ENCODE measurements at regions of chr2 and their contacts with region 1.

Region 1: GRCh38 chr2:218568190-218569037 is at the starts of genes CNOT9 and USP37:
- DNase-seq: peak; percentile 95
- H3K4me3 ChIP-seq: peak within 1 kb of the TSS; percentile 81
- CTCF ChIP-seq: no peak

Region 2: DNA sequence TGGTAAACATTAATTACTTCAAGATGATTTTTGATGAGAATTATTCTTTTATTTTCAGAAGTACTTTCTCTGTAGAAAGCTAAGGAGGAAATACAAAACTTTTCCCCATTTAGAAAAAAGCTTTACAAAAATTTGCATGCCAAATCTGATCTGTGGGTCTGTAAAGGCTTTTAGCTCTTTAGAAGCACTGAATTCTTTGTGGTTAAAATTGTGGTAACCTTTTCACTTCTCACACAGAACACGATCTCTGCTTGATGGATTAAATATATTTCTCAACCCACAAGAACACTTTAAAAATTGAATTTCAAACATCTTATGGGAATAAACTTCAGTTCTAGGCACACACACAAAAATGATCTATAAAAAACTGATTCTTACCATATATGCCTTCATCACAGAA is 85.8 kb before region 1 on chr2:
- in situ Hi-C with region 1: loop called (anchors 5 kb)
- DNase-seq: peak; percentile 55
- H3K4me3 ChIP-seq: no peak overlapping the region
- CTCF ChIP-seq: no peak

Region 3: DNA sequence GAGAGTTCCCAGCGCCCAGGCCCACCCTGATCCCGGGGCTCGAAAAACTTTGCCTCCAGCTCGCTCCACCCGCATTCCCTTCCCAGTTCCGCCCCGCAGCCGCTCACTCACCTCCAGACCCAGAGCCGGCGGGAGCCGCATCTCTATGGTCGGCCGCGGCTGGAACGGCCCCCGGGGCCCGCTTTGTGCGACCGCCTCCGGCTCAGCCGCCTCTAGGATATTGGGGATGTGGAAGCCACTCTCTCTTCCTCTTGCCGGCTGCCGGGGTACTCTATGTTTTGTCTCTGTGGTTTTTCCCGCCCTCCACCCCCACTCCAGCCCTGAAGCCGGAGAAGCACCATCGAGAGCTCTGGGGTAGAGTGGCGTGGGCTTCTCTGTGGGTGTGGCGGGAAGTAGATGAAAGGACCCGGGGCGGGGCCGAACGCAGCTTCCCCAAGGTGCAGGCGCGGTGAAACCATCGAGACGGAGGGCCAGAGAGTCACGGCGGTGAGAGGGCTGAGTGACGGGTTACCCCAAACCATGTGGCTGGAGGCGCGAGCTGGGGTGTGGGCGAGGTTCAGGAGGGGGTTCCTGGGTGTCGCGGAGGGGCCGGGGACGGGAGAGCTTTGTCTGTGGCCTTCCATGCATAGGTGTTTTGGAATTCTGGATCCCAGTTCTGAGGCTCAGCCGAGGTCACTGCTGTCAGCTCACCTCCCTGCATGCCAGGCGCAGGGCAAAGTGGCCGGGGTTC is 91.0 kb after region 1 on chr2 and contains the starts of genes BCS1L and ZNF142:
- in situ Hi-C with region 1: loop called (anchors 5 kb)
- DNase-seq: peak; percentile 57
- H3K4me3 ChIP-seq: peak within 1 kb of the TSS; percentile 74
- CTCF ChIP-seq: no peak

Region 4: GRCh38 chr2:218852911-218853667 is 284.7 kb after region 1 on chr2:
- in situ Hi-C with region 1: no loop called
- DNase-seq: peak; percentile 16
- H3K4me3 ChIP-seq: no peak overlapping the region
- CTCF ChIP-seq: peak; percentile 70

Measured in astrocyte of the cerebellum (primary cell).